Gastrocnemius medialis (tissue), 4 donors: ENCODE measurements at regions of chr10 and their contacts with region 1.

Region 1: DNA sequence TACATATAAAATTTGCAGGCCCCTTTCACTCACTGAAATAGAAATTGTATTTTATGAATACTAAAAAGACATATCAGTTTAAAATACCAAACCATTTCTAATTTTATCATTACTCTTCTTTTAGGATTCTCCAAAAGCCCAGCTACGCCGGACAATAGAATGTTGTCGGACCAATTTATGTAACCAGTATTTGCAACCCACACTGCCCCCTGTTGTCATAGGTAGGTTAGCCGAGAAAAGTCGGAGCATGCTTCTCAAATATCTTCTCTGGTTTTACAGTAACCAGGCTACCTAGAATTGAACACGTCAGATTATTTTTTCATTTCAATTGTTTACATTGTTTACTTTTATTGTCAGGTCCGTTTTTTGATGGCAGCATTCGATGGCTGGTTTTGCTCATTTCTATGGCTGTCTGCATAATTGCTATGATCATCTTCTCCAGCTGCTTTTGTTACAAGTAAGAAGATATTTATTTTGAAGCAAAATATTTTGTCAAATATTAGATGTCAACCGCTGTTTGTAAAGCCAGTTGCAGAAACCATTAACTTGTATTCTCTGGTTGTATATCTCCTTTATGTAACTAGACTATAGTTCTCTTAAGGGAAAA is 57.6 kb downstream of the MMRN2 start:
- DNase-seq: peak; percentile 50 to 67
- ATAC-seq: peak; percentile 77 to 80
- H3K4me3 ChIP-seq: no peak overlapping the region
- H3K27ac ChIP-seq: peak overlapping the region in 3 of 4 donors; percentile 6 to 67 (median 65)
- H3K4me1 ChIP-seq: peaks cover 15 to 24% of the 10 kb centered on the region in 2 donors
- H3K27me3 ChIP-seq: no peaks in the 10 kb centered on the region
- CTCF ChIP-seq: peak; percentile 61 to 75 (median 69)
- POLR2A ChIP-seq: no peak

Region 2: GRCh38 chr10:86644152-86644793 is 255.5 kb before region 1 on chr10:
- in situ Hi-C with region 1: no loop called
- intact Hi-C with region 1: loop called (anchors 5 kb)
- DNase-seq: no peak
- ATAC-seq: peak in 1 of 2 donors; percentile 43
- H3K4me3 ChIP-seq: no peak overlapping the region
- H3K27ac ChIP-seq: peak overlapping the region; percentile 53 to 86 (median 70)
- H3K4me1 ChIP-seq: peaks cover 23 to 26% of the 10 kb centered on the region in 2 donors
- H3K27me3 ChIP-seq: no peaks in the 10 kb centered on the region
- CTCF ChIP-seq: peak in 1 of 5 experiments; percentile 28
- POLR2A ChIP-seq: no peak

Region 3: GRCh38 chr10:86688398-86688921 is 211.3 kb before region 1 on chr10:
- in situ Hi-C with region 1: loop called in 1 of 4 experiments (anchors 10 kb)
- intact Hi-C with region 1: loop called (anchors 1 kb)
- DNase-seq: peak; percentile 46 to 70
- ATAC-seq: peak; percentile 43 to 52
- H3K4me3 ChIP-seq: no peak overlapping the region
- H3K27ac ChIP-seq: peak overlapping the region; percentile 2 to 99 (median 60)
- H3K4me1 ChIP-seq: peaks cover 65 to 78% of the 10 kb centered on the region in 2 donors
- H3K27me3 ChIP-seq: no peaks in the 10 kb centered on the region
- CTCF ChIP-seq: peak; percentile 81 to 91 (median 86)
- POLR2A ChIP-seq: no peak

Region 4: GRCh38 chr10:86693721-86694369 is 205.9 kb before region 1 on chr10:
- in situ Hi-C with region 1: loop called in 2 of 4 experiments (anchors 5 to 10 kb)
- intact Hi-C with region 1: no loop called
- DNase-seq: no peak
- ATAC-seq: no peak
- H3K4me3 ChIP-seq: no peak overlapping the region
- H3K27ac ChIP-seq: peak overlapping the region; percentile 2 to 99 (median 64)
- H3K4me1 ChIP-seq: peaks cover 34 to 37% of the 10 kb centered on the region in 2 donors
- H3K27me3 ChIP-seq: no peaks in the 10 kb centered on the region
- CTCF ChIP-seq: peak; percentile 26 to 44 (median 33)
- POLR2A ChIP-seq: no peak

Region 5: GRCh38 chr10:86710987-86711512 is 188.7 kb before region 1 on chr10:
- in situ Hi-C with region 1: loop called in 2 of 4 experiments (anchors 5 to 10 kb)
- intact Hi-C with region 1: loop called (anchors 1 kb)
- DNase-seq: peak; percentile 76 to 90
- ATAC-seq: peak; percentile 69 to 77
- H3K4me3 ChIP-seq: peak overlapping the region; percentile 65 to 90 (median 78)
- H3K27ac ChIP-seq: peak overlapping the region; percentile 91 to 97 (median 96)
- H3K4me1 ChIP-seq: peaks cover 27 to 48% of the 10 kb centered on the region in 2 donors
- H3K27me3 ChIP-seq: no peaks in the 10 kb centered on the region
- CTCF ChIP-seq: peak; percentile 82 to 96 (median 94)
- POLR2A ChIP-seq: peak; percentile 78 to 85